ENCODE measurements at regions of chr21 and their contacts with region 1.

Region 1: DNA sequence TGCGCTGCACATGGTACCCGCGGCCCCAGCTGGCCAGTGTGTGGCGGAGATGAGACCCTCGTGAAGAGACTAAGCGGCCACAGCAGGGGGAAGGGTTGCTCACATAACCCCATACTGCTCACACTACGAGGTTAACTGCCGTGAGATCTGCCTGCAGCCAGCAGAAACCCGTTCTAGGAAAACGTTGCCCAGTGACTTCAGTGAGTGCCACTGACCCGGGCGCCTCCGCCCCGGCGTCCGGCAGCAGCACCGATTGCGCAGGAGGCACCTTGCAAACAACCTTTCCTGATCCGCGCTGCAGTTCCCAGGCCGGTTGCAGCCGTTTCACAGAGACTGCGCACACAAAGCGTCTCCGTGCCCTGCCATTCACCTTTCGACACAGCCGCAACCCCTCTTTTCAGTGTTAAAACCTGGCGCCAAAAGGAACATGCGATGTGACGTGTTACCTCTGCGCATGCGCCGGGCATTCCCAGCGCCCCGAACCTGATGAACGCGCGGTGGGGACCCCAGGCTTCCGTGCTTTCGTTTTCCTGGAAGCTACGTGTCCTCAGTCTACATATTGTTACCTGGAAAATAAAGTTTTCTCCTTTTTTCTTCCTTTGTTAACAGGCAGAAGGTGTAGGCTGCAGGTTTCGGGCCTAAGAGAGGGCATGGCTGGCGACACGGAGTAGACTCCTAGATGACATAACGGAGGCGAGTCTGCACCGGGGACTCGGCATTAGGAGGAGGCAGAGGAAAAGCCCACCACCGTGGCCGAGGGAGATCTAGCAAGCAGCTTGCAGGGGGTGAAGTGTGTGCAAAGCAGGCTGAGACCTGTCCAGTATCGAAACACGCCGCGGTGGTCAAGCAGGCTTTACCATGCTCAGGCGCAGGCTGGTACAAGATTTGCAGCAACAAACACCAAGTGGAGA is 8.9 kb downstream of the VPS26C start:
- DNase-seq: peak; percentile 84
- H3K4me3 Mint-ChIP-seq: peak overlapping the region; percentile 75
- H3K27ac Mint-ChIP-seq: peak overlapping the region; percentile 75
- H3K4me1 Mint-ChIP-seq: peaks cover 15% of the 10 kb centered on the region
- H3K27me3 Mint-ChIP-seq: no peaks in the 10 kb centered on the region
- CTCF ChIP-seq: no peak

Region 2: GRCh38 chr21:37240978-37241377 is 17.2 kb before region 1 on chr21:
- CTCF ChIA-PET with region 1: no interaction called
- POLR2A ChIA-PET with region 1: no interaction called
- intact Hi-C with region 1: no loop called
- DNase-seq: no peak
- H3K4me3 Mint-ChIP-seq: no peak overlapping the region
- H3K27ac Mint-ChIP-seq: no peak overlapping the region
- H3K4me1 Mint-ChIP-seq: peaks cover 6% of the 10 kb centered on the region
- H3K27me3 Mint-ChIP-seq: no peaks in the 10 kb centered on the region
- CTCF ChIP-seq: no peak

Region 3: DNA sequence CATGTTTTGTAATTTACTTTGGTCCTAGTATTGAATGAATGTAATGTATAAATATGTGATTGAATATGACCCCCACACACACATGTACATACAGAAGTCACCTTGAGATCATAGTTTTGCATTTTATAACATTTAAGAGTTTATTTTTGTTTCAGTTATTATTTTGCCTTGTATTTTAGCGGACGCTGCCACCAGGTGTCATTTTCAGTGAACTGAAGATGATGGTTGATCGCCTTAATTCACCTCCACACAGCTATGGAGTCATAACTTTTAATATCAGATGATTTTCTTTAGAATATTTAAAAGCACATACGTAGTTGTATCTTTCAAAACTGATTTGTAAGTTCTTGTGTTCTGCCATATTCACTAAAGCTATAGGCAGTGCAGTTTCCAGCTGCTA is 238.8 kb after region 1 on chr21:
- CTCF ChIA-PET with region 1: no interaction called
- POLR2A ChIA-PET with region 1: no interaction called
- intact Hi-C with region 1: loop called (anchors 10 kb)
- DNase-seq: peak; percentile 14
- H3K4me3 Mint-ChIP-seq: no peak overlapping the region
- H3K27ac Mint-ChIP-seq: no peak overlapping the region
- H3K4me1 Mint-ChIP-seq: peaks cover 4% of the 10 kb centered on the region
- H3K27me3 Mint-ChIP-seq: no peaks in the 10 kb centered on the region
- CTCF ChIP-seq: peak; percentile 30